Spleen (tissue), 13 donors: ENCODE measurements at regions of chr3 and their contacts with region 1.

Region 1: GRCh38 chr3:177197041-177197727 is at the start of gene TBL1XR1:
- DNase-seq: peak; percentile 96
- H3K4me3 ChIP-seq: peak within 1 kb of the TSS; percentile 51 to 93 (median 80)
- H3K27ac ChIP-seq: peak within 1 kb of the TSS; percentile 92 to 100 (median 97)
- H3K4me1 ChIP-seq: peaks cover 30 to 81% (median 60%) of the 10 kb centered on the region in 6 donors
- H3K27me3 ChIP-seq: no peaks in the 10 kb centered on the region
- CTCF ChIP-seq: no peak
- POLR2A ChIP-seq: peak in 1 of 3 donors; percentile 10
- total RNA-seq, gene TBL1XR1: 78.0 to 168 (median 153) TPM

Region 2: DNA sequence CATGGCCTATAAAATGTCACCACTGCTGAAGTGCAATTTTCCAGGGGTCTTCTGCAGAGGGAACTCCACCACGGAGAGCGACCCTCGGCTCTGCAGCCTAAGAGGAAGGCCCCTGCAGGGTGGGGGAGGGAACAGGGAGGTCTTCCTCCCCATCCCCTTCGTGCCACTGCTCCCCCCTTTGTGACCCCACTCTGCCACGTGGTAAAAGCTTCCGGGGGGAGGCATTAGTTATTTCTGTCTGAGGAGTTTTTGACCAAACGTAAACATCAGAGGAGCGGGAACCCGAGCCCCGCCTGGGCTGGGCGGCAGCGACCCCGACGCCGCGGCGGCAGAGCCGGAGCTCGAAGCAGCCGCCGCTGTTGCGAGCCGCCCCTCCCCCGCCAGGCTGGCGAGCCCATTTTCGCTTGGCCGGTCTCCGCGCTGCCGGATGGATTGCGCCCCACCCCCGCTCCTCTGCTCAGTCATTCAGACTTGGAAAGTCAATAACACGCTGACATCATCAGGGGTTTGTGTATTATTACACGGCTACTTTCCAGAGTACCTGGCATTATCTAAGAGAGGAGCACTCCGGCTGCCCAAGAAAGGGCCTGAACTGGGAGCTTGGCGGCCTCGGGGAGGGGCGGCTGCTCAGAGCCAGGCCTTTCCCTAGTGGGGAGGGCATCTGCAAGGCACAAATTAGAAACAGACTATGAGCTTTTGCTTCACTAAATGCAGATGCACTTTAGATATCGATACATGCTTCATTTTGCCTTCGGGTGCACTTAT is 162.6 kb after region 1 on chr3:
- intact Hi-C with region 1: loop called (anchors 2 kb)
- DNase-seq: peak; percentile 99
- H3K4me3 ChIP-seq: peak overlapping the region; percentile 28 to 72 (median 35)
- H3K27ac ChIP-seq: peak overlapping the region; percentile 77 to 97 (median 94)
- H3K4me1 ChIP-seq: peaks cover 30 to 65% (median 49%) of the 10 kb centered on the region in 6 donors
- H3K27me3 ChIP-seq: no peaks in the 10 kb centered on the region
- CTCF ChIP-seq: peak in 4 of 11 experiments; percentile 6 to 21 (median 9)
- POLR2A ChIP-seq: peak in 2 of 3 donors; percentile 66 to 68

Region 3: GRCh38 chr3:177441813-177442646 is 244.8 kb after region 1 on chr3:
- intact Hi-C with region 1: no loop called
- DNase-seq: no peak
- H3K4me3 ChIP-seq: no peak overlapping the region
- H3K27ac ChIP-seq: peak overlapping the region in 7 of 8 donors; percentile 6 to 75 (median 62)
- H3K4me1 ChIP-seq: peaks cover 5 to 42% (median 26%) of the 10 kb centered on the region in 6 donors
- H3K27me3 ChIP-seq: no peaks in the 10 kb centered on the region
- CTCF ChIP-seq: no peak
- POLR2A ChIP-seq: no peak